ENCODE measurements at regions of chr3 and their contacts with region 1.

Region 1: GRCh38 chr3:15205934-15206661 is at the start of gene CAPN7:
- DNase-seq: peak; percentile 95 to 98 (median 97)
- ATAC-seq: peak; percentile 93 to 99 (median 98)
- H3K4me3 ChIP-seq: peak within 1 kb of the TSS; percentile 58 to 98 (median 84)
- H3K27ac ChIP-seq: peak within 1 kb of the TSS; percentile 90 to 98 (median 96)
- H3K4me1 ChIP-seq: peaks cover 0 to 45% (median 27%) of the 10 kb centered on the region in 12 donors
- H3K27me3 ChIP-seq: no peaks in the 10 kb centered on the region
- CTCF ChIP-seq: peak; percentile 5 to 58 (median 34)
- POLR2A ChIP-seq: peak; percentile 72 to 94
- total RNA-seq, gene CAPN7: 15.4 to 38.2 (median 24.9) TPM

Region 2: DNA sequence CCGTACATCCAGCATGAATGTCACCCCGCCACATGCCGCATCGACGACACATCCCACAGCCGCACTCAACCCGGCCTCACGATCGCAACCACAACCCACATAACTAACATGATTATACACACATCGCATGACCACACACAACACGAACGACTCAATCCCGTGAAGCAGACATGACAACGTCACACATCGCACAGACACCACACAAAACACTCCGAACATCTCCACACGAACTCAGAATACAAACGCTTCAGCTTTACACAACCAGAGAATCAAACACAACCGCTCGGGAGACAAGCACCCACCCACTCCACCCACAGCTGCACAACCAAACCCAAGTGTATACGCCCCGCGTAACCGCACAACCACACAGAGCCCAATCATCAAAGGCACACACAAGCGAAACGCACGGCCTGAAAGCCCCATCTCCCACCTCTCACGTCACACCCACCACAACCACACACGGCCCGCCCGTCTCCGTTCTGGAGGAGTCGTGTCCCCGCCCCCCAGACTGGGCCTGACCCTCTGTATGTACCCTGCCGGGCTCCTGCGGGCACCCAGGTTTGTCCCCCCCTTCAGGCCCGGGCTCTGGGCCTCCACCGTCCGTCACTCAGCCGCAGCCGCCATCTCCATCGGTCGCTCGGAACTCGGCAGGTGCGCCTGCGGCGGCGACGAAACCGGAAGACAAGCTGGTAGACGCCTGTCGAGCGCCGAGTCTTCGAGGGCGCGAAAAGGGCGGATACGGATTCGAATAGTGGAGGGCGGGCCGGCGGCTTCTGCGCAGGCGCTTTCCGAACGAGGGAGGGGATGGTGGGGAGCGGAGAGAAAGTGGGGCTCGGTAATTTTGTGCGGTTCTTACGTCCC is 107.4 kb before region 1 on chr3 and contains the start of gene RBSN:
- intact Hi-C with region 1: loop called in 2 of 10 experiments (anchors 2 to 5 kb)
- DNase-seq: peak; percentile 94 to 98 (median 97)
- ATAC-seq: peak; percentile 38 to 79 (median 76)
- H3K4me3 ChIP-seq: peak within 1 kb of the TSS; percentile 75 to 93 (median 82)
- H3K27ac ChIP-seq: peak within 1 kb of the TSS; percentile 54 to 94 (median 87)
- H3K4me1 ChIP-seq: peaks cover 3 to 46% (median 18%) of the 10 kb centered on the region in 12 donors
- H3K27me3 ChIP-seq: no peaks in the 10 kb centered on the region
- CTCF ChIP-seq: no peak
- POLR2A ChIP-seq: peak in 1 of 2 donors; percentile 89
- total RNA-seq, gene RBSN: 17.9 to 24.1 (median 21.6) TPM

Region 3: GRCh38 chr3:15113463-15113862 is 92.6 kb before region 1 on chr3:
- intact Hi-C with region 1: loop called in 4 of 10 experiments (anchors 5 to 10 kb)
- DNase-seq: no peak
- ATAC-seq: no peak
- H3K4me3 ChIP-seq: no peak overlapping the region
- H3K27ac ChIP-seq: no peak overlapping the region
- H3K4me1 ChIP-seq: peaks cover 0 to 6% (median 0%) of the 10 kb centered on the region in 12 donors
- H3K27me3 ChIP-seq: peaks cover 0 to 7% (median 0%) of the 10 kb centered on the region in 9 donors
- CTCF ChIP-seq: no peak
- POLR2A ChIP-seq: no peak

Region 4: GRCh38 chr3:15186101-15186476 is 20.0 kb before region 1 on chr3:
- intact Hi-C with region 1: no loop called
- DNase-seq: no peak
- ATAC-seq: no peak
- H3K4me3 ChIP-seq: no peak overlapping the region
- H3K27ac ChIP-seq: no peak overlapping the region
- H3K4me1 ChIP-seq: peaks cover 0 to 12% (median 0%) of the 10 kb centered on the region in 12 donors
- H3K27me3 ChIP-seq: no peaks in the 10 kb centered on the region
- CTCF ChIP-seq: no peak
- POLR2A ChIP-seq: no peak

Region 5: DNA sequence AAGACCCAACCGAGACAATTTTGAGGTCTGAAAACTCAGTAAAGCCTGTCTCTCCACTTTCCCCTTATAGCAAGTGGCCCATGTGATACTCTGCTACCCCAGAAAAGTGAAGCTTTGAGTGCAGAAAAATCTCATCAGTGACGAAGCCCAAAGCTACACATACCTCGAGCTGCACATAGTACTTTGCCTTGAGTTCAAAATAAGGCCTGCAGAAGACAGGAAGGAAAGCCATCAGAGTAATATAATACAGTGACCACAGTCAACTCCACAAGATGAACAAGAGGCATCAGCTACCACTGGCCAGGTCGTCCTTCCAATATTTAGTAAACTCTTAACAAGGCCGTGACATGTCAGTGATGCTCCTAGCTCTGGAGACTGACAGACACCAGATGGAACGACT is 53.5 kb after region 1 on chr3:
- intact Hi-C with region 1: no loop called
- DNase-seq: no peak
- ATAC-seq: no peak
- H3K4me3 ChIP-seq: no peak overlapping the region
- H3K27ac ChIP-seq: no peak overlapping the region
- H3K4me1 ChIP-seq: peaks cover 0 to 25% (median 4%) of the 10 kb centered on the region in 12 donors
- H3K27me3 ChIP-seq: no peaks in the 10 kb centered on the region
- CTCF ChIP-seq: no peak
- POLR2A ChIP-seq: no peak

Region 6: DNA sequence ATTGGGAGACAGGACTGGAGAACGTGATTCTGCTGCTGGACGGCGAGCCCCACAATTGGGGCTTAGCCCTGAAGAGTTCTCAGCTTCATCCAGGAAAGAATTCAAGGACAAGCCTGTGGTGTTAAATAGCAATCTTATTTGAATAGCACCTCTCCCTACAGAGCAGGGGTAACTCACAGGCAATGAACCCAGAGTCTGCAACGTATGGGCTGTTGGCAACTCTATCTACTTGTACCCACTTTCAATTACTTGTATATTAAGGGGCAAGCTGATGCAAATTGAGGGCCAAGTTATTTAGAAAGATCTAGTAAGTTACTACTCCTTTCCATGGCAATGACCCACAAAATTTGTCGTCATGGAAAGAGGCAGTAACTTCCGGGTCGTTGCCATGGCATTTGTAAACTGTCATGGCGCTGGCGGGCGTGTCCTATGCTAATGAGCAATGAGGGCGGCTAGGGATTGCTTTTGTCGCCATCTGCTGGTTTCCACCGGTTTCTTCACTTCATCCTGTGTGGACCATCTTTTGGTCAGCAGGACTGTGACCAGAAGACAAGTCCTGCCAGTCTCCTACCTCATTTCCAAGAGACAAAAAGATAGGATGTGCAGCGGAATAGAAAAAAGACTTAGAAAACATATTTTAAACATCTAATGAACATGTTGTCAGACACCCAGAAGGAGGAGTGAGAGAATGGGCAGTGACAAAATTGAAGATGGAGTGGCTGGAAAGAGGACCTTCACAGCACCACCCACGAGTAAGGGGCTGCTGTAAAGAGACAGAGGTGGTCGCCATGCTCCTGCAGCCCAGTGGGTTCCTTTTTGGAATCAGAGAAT is 172.1 kb after region 1 on chr3:
- intact Hi-C with region 1: loop called in 3 of 10 experiments (anchors 5 to 10 kb)
- DNase-seq: peak; percentile 92 to 97 (median 94)
- ATAC-seq: peak; percentile 97 to 98 (median 98)
- H3K4me3 ChIP-seq: peak overlapping the region in 3 of 12 donors; percentile 0 to 25 (median 20)
- H3K27ac ChIP-seq: peak overlapping the region in 8 of 12 donors; percentile 8 to 73 (median 56)
- H3K4me1 ChIP-seq: peaks cover 0 to 6% (median 0%) of the 10 kb centered on the region in 12 donors
- H3K27me3 ChIP-seq: no peaks in the 10 kb centered on the region
- CTCF ChIP-seq: peak; percentile 68 to 91 (median 82)
- POLR2A ChIP-seq: peak in 1 of 2 donors; percentile 33

Region 7: DNA sequence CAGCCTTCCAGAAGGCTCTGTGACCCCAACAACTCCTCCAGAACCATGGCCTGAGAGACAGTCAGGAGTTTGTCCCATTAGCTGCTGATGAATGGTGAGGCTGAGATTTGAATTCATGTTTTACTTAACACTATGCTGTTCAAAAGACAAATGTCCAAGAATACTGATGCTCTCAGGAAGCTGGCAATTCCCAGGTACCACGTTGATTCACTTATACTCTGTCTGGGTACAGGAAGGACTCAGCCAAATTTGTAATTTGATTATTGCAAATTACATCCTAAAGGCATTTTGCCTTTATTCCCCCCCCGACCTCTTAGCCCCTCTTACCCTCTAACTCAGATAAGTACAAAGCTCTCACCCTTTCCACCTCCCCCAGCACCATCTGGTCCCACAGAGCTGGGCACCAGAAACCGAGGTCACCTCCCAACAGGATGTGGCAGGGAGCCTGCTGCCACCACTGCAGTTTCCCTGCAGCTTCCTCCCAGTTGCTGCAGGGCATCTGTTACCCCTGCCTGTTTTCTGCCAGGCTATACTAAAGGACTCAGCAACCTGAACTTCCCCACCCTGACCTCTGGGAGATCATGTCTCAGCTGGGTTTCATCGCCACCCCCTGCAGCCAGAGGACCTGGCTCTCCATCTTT is 254.9 kb after region 1 on chr3:
- intact Hi-C with region 1: no loop called
- DNase-seq: no peak
- ATAC-seq: no peak
- H3K4me3 ChIP-seq: no peak overlapping the region
- H3K27ac ChIP-seq: no peak overlapping the region
- H3K4me1 ChIP-seq: peaks cover 0 to 14% (median 0%) of the 10 kb centered on the region in 12 donors
- H3K27me3 ChIP-seq: no peaks in the 10 kb centered on the region
- CTCF ChIP-seq: no peak
- POLR2A ChIP-seq: no peak

Region 8: GRCh38 chr3:15557511-15557946 is 351.4 kb after region 1 on chr3:
- intact Hi-C with region 1: loop called (anchors 2 to 10 kb)
- DNase-seq: peak in 2 of 5 donors; percentile 35 to 39
- ATAC-seq: peak; percentile 33 to 79 (median 71)
- H3K4me3 ChIP-seq: no peak overlapping the region
- H3K27ac ChIP-seq: peak overlapping the region in 1 of 12 donors; percentile 67
- H3K4me1 ChIP-seq: peaks cover 0 to 21% (median 0%) of the 10 kb centered on the region in 12 donors
- H3K27me3 ChIP-seq: no peaks in the 10 kb centered on the region
- CTCF ChIP-seq: peak; percentile 41 to 77 (median 60)
- POLR2A ChIP-seq: no peak